Posterior cingulate gyrus (tissue), 11 donors: ENCODE measurements at regions of chr15 and their contacts with region 1.

Region 1: GRCh38 chr15:83436458-83437158 is 10.5 kb upstream of the SH3GL3 start:
- DNase-seq: no peak

Region 2: GRCh38 chr15:83248151-83249029 is 188.2 kb before region 1 on chr15:
- intact Hi-C with region 1: loop called (anchors 1 kb)
- DNase-seq: peak in 2 of 10 donors; percentile 26 to 83

Region 3: DNA sequence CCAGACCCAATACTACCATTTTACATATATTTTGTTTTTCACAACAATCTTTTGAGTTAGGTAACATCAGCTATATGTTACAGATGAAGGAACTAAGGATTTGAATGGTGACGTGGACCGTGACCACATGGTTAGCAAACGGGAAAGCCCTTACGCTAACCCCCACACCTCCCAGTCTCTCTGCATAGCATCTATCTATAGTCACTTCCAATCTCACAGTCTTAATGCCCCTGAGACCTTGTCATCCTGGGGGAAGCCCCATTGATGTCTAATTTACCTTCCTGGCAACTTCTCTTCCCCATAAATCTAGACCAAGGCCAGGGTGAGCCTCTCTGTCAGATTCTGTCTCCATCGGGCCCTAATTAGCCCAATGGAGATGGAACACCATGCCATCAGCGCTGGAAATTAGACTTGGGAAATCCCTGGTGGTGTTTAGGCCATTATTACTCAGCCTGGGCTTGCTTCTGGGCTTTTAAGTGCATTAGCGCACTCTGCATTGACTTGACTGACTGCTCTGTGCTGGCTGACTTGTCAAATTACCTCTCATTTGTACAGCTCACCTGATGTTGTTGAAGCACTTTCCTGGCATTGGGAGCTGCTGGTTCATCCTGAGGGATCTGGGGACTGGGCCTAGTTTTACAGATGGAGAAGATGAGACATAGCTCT is 23.4 kb before region 1 on chr15:
- intact Hi-C with region 1: no loop called
- DNase-seq: no peak

Region 4: GRCh38 chr15:83559310-83559966 is 122.8 kb after region 1 on chr15:
- intact Hi-C with region 1: loop called (anchors 2 kb)
- DNase-seq: peak in 9 of 10 donors; percentile 41 to 92 (median 75)

Region 5: DNA sequence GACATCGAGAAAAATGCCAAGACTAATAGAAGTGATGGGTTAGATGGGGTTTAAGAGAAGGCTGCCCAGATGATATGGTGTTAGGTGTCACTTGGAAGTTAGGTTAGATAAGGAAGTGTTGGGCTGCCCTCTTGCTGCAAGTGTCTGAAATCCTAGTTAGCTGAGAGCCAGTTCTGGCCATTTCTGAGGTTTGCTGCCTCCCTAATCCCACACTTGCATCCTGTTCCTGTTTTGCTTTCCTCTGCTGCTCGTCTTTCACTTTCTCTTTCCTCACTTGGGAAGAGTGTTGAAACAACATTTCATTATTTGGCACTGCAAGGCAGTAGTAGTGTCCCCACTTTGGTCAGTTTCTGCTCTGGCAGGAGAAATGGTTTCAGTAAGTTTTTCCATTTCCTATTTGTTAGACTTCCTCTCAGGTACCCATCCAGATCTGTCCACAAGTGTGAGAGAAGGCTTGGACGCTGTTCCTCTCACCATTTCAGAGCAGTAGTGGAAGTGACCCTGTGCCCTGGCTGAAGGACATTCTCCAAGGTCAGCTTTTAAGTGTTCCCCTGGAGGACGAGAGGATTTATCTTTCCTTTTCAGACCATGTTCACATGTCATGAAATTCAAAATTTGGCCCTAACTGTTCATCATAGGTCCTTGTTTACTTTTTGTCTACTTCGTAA is 310.6 kb after region 1 on chr15:
- intact Hi-C with region 1: loop called (anchors 5 kb)
- DNase-seq: no peak

Region 6: GRCh38 chr15:83837945-83838571 is 401.4 kb after region 1 on chr15:
- intact Hi-C with region 1: loop called (anchors 5 kb)
- DNase-seq: peak; percentile 25 to 93 (median 59)

Region 7: DNA sequence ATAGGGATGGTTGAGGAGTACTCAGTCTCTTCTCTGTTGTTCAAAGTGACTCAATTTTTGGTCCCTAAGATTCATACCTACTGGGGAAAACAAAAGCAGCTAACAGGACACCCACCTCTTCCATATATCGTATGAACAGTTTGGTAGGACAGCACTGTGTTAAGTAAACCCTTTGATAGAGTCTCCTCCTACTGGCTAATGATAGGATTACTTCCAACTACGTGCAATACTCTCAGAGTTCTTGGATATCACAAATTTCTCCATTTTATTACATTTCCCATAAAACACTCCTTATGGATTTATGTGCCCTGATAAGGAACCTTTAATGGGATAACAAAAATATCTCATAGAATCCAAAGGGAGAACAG is 598.8 kb after region 1 on chr15:
- intact Hi-C with region 1: loop called (anchors 1 kb)
- DNase-seq: no peak